T-cell (primary cell): ENCODE measurements at regions of chr7 and their contacts with region 1.

Region 1: GRCh38 chr7:117127585-117128168 is 174.4 kb downstream of the ST7 start:
- DNase-seq: peak in 30 of 35 experiments; percentile 5 to 72 (median 39)
- ATAC-seq: peak in 1 of 4 experiments; percentile 63
- H3K4me3 ChIP-seq: no peak overlapping the region
- H3K4me3 Mint-ChIP-seq: no peak overlapping the region
- H3K27ac ChIP-seq: no peak overlapping the region
- H3K27ac Mint-ChIP-seq: no peak overlapping the region
- H3K4me1 ChIP-seq: no peaks in the 10 kb centered on the region
- H3K4me1 Mint-ChIP-seq: peaks cover 0 to 2% (median 0%) of the 10 kb centered on the region in 3 donors
- H3K27me3 ChIP-seq: no peaks in the 10 kb centered on the region
- H3K27me3 Mint-ChIP-seq: no peaks in the 10 kb centered on the region

Region 2: DNA sequence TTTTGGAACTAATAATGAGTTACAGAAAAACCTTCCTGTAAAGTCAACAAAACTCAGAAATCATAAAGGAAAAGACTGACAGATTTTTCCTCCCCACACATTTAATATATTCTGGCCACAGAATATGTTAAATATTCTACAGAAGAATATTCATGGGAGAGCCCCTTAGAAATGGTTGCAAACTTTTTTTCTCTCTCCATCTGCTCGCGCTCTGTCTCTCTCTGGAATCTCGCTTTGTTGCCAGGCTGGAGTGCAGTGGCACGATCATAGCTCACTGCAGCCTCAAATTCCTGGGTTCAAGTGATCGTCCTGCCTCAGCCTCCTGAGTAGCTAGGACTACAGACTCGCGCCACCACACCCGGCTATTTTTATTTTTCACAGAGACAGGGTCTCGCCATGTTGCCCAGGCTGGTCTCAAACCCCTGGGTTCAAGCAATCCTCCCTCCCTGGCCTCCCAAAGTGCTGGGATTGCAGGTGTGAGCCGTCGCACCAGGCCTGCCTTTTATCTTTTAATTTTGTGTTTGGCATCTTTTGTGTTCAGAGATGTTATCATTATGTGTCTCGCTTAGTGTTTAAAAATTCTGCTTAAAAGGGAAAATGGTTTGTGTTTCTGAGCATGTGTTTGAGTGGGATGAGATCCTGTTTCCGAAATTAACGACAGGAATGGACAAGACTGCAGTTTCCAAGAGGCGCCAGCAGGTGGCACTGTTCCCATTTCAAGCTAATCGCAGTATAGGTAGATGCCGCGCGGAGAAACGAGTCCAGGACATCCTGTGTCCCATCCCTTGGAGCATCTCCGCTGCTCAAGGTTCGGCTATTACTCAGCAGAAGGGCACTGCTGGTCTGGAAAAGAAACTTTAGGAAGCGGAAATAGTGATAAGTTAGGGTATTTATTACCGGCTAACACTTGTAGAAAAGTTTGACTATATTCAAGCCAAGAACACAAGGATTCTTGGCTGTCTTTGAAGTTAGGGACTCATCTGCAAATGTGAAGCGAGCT is 197.5 kb before region 1 on chr7:
- CTCF ChIA-PET with region 1: interaction called, 32 to 84 read pairs
- POLR2A ChIA-PET with region 1: interaction called in 1 of 2 experiments, 5 read pairs
- DNase-seq: peak; percentile 34 to 85 (median 68)
- ATAC-seq: peak; percentile 81 to 87 (median 84)
- H3K4me3 ChIP-seq: no peak overlapping the region
- H3K4me3 Mint-ChIP-seq: no peak overlapping the region
- H3K27ac ChIP-seq: no peak overlapping the region
- H3K27ac Mint-ChIP-seq: no peak overlapping the region
- H3K4me1 ChIP-seq: peaks cover 0 to 4% of the 10 kb centered on the region in 2 experiments
- H3K4me1 Mint-ChIP-seq: peaks cover 3 to 11% (median 7%) of the 10 kb centered on the region in 3 donors
- H3K27me3 ChIP-seq: peaks cover 0 to 4% of the 10 kb centered on the region in 2 experiments
- H3K27me3 Mint-ChIP-seq: peaks cover 1 to 4% of the 10 kb centered on the region in 2 donors

Region 3: DNA sequence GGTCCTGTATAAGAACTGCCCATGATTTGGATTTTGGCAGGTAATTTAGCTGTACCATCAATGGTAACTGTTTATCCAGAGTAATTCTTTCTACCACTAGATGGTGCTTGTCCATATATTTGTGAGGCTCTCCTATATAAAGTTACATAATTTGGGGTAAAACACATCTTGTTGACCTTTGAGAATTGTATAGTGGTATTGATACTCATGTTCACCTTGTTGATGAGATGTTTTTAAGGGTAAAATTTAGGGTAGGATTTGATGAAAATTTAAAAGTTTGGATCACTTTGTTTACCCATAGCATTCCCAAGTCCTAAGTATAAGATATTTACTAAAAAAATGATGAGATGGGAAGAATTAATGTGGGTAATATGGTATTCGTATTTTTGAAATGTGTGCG is 142.8 kb before region 1 on chr7:
- CTCF ChIA-PET with region 1: interaction called, 101 to 108 read pairs
- POLR2A ChIA-PET with region 1: no interaction called
- DNase-seq: peak in 1 of 35 experiments; percentile 62
- ATAC-seq: peak in 2 of 4 experiments; percentile 59 to 66
- H3K4me3 ChIP-seq: no peak overlapping the region
- H3K4me3 Mint-ChIP-seq: no peak overlapping the region
- H3K27ac ChIP-seq: no peak overlapping the region
- H3K27ac Mint-ChIP-seq: no peak overlapping the region
- H3K4me1 ChIP-seq: no peaks in the 10 kb centered on the region
- H3K4me1 Mint-ChIP-seq: peaks cover 2 to 4% (median 3%) of the 10 kb centered on the region in 3 donors
- H3K27me3 ChIP-seq: no peaks in the 10 kb centered on the region
- H3K27me3 Mint-ChIP-seq: no peaks in the 10 kb centered on the region

Region 4: DNA sequence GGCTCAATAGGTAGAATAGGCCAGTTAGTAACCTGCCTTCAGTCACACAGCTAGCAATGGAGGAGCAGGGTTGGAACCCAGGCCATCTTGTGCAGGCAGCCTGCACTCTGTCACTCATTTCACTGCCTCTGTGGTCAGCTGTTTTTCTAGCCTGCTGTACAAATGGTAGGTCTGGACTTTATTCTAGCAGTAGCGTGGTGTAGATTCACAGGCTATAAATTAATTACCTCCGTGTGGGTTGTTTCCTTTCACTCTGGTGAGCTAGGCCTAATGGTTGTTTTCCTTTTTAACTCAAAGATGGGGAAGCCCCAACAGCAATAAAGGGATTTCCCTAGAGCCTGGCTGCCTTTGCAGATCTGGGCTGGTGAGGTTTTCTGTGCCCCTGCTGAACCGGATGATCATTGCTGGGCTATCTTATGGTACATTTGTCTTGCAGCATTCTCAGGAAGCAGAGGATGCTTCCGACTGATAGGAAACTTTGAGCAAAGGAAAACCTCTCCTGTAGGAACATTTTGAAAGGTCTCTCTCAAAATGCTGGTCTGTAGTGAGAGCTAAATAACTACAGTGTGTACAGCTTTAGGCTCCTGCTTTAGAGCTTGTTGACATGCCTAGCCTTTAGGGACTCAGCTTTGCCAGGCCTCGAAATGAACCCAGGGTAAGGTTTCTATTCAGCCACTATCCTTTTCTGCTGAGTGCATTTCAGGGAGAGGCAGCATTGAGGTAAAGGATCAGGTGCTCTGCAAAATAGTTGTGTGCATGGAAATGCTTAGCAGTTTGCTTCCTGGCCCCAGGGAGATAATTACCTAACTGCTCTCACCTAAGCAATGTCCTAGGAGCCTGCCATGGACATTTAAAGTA is 17.0 kb before region 1 on chr7:
- CTCF ChIA-PET with region 1: interaction called, 5 to 10 read pairs
- POLR2A ChIA-PET with region 1: no interaction called
- DNase-seq: peak in 32 of 35 experiments; percentile 9 to 74 (median 32)
- ATAC-seq: peak; percentile 94 to 99 (median 98)
- H3K4me3 ChIP-seq: no peak overlapping the region
- H3K4me3 Mint-ChIP-seq: peak overlapping the region in 2 of 3 donors; percentile 22 to 28
- H3K27ac ChIP-seq: peak overlapping the region; percentile 14
- H3K27ac Mint-ChIP-seq: peak overlapping the region; percentile 71 to 75
- H3K4me1 ChIP-seq: peaks cover 9 to 13% of the 10 kb centered on the region in 2 experiments
- H3K4me1 Mint-ChIP-seq: peaks cover 11 to 26% (median 17%) of the 10 kb centered on the region in 3 donors
- H3K27me3 ChIP-seq: no peaks in the 10 kb centered on the region
- H3K27me3 Mint-ChIP-seq: no peaks in the 10 kb centered on the region

Region 5: GRCh38 chr7:117202511-117202910 is 74.8 kb after region 1 on chr7:
- CTCF ChIA-PET with region 1: no interaction called
- POLR2A ChIA-PET with region 1: no interaction called
- DNase-seq: no peak
- ATAC-seq: no peak
- H3K4me3 ChIP-seq: no peak overlapping the region
- H3K4me3 Mint-ChIP-seq: no peak overlapping the region
- H3K27ac ChIP-seq: no peak overlapping the region
- H3K27ac Mint-ChIP-seq: no peak overlapping the region
- H3K4me1 ChIP-seq: no peaks in the 10 kb centered on the region
- H3K4me1 Mint-ChIP-seq: no peaks in the 10 kb centered on the region
- H3K27me3 ChIP-seq: no peaks in the 10 kb centered on the region
- H3K27me3 Mint-ChIP-seq: no peaks in the 10 kb centered on the region